AG04449 (cell line): ENCODE measurements at regions of chr14 and their contacts with region 1.

Region 1: DNA sequence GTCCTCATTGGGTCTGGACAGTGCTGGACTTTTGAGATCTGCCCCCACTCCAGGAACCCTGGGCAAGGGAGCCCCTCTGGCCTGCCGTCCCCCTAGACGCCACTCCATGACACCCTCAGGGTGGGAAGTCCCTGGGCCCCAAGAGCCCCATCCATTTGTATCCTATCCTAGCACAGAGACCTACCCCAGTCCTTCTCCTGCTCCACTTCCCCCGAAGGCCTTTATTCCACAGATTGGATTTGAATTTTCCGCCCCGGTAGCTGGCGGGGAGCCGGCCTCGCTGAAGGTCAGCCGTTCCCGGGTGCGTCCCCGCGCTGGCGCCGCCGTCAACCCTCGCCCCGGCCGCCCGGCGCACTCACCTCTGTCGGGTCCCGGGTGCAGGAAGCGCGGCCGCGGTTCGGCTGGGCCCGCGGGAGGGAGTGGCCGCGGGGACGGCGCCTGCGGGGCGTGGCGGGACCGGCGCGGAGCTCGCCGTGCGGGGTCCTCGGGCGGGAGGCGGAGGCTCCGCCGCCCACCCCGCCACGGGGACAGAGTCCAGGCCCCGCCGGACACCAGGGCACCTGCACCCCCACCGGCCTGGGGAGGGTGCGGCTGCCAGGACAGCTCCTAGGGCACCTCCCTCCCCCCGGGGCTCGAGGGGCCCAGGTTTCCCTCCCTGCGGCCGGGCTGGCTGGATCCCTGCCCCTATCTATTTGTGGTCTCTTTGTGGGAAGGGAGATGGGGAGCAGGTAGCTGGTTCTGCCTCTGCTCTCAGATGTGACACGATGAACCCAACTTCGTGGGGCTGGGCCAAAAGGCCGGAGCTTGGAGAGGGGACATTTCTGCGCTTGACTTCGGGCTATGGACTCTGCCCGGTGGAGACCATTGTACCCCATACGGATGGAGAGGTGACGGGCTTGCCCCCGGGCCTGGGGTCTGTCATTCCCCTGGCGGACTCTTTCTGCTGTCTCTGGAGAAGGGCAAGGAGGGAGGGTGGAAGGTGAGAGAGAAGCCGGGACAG is 19.9 kb upstream of the GPR68 start:
- DNase-seq: no peak
- H3K4me3 ChIP-seq: peak overlapping the region; percentile 27
- CTCF ChIP-seq: no peak

Region 2: DNA sequence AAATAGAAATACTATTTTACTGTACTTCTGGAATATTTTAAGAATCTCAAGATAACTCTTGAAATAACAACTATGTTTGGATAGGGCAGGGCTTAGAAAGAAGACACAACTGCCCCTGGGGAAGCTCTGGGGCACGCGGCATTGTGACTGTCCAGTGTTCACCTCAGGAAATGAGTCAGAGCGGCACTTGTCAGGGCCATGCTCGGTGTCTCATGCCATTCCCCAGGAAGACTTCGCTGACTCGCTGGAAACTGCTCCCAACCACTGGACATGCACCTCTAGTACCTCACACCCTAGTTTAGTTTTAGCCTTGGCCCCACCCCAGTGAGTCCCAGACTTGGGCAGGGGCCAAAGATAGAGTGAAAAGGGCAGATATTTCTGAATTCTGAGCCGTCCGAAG is 640.2 kb before region 1 on chr14:
- CTCF ChIA-PET with region 1: no interaction called
- POLR2A ChIA-PET with region 1: no interaction called
- DNase-seq: no peak
- H3K4me3 ChIP-seq: no peak overlapping the region
- CTCF ChIP-seq: no peak

Region 3: DNA sequence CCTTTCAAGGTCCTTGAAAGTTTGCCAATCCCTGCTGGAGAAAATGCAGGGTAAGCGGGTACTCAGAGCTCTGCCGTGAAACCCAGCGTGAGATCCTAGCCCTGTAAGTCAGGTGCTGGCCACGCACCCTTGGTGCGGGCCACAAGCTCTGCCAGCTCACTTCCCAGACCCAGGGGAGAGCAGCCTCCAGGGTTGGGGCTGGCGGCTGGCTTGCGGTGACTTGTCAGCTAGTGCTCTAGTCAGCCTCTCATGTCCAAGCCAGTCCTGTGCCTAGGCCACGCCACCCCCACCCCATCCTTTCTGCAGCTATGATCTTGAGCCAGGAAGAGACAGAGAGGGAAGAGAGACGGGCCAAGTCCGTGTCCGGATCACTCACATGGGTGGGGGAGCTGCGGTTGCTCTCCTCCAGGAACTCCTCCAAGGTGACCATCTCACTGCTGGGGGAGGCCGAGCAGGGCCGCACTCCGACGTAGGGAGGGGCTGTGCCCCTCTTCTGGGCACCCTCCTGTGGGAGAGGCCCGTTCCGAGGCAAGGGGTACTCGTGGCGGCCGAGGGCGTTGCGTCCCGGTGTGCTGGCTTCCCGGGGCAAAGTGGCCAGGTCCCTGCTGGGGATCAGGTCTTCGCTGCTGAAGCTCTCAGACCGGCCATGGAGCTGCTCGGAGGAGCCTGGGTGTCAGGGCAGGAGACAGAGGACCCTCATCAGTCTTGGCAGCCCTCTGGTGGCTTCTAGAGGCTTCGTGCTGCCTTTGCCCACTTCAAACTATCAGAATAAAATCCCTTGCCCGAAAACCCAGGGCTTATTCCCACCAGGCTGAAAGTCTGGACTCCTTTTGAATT is 13.3 kb after region 1 on chr14:
- CTCF ChIA-PET with region 1: interaction called, 10 read pairs
- POLR2A ChIA-PET with region 1: no interaction called
- DNase-seq: no peak
- H3K4me3 ChIP-seq: no peak overlapping the region
- CTCF ChIP-seq: no peak